HepG2 (cell line): ENCODE measurements at regions of chr6 and their contacts with region 1.

Region 1: GRCh38 chr6:14210663-14211561 is 93.3 kb downstream of the CD83 start:
- DNase-seq: peak; percentile 74
- ATAC-seq: peak; percentile 91
- H3K4me3 ChIP-seq: peak overlapping the region; percentile 56 to 80 (median 58)
- H3K27ac ChIP-seq: no peak overlapping the region
- H3K4me1 ChIP-seq: peaks cover 31% of the 10 kb centered on the region
- H3K27me3 ChIP-seq: peaks cover 0 to 21% of the 10 kb centered on the region in 2 experiments; a peak in 3 of 5 replicates
- CTCF ChIP-seq: peak; percentile 75
- EP300 ChIP-seq: peak in 1 of 2 experiments; percentile 87; a peak in 2 of 4 replicates
- POLR2A ChIP-seq: peak in 1 of 2 experiments; percentile 53; a peak in 1 of 4 replicates
- RAD21 ChIP-seq: peak; percentile 99

Region 2: DNA sequence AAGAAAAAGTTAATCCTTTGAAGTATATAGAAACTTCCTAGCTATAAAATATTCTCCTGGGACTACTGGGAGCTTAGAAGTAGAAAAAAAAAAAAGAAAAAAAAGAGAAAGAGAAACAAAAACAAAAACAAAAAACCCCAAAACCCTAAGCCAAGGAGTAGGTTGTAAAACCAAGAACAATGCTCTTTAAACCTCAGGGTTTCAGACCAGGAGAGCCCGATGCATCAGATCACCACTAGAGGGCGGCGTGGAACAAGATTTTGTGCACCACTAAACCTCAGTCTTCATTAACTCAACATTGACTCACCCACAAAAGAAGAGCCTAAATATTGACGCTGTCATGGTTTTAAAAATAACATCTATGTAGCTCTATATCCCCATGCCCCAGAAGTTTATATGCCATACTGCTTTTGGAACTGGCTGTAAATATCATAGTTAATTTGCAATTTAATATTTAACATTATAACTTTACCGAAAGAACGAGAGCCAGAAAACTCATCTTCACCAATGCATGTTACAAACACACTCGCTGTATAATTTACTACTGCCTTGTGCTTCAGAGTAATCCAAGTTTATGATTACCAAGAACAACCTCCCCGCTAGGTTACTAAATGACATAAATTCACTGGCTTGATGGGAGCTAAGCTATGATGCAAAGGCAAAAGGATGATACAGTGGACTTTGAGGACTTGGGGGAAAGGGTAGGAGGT is 415.7 kb before region 1 on chr6:
- CTCF ChIA-PET with region 1: no interaction called
- POLR2A ChIA-PET with region 1: no interaction called
- in situ Hi-C with region 1: no loop called
- intact Hi-C with region 1: no loop called
- DNase-seq: peak; percentile 73
- ATAC-seq: peak; percentile 93
- H3K4me3 ChIP-seq: no peak overlapping the region
- H3K27ac ChIP-seq: no peak overlapping the region
- H3K4me1 ChIP-seq: no peaks in the 10 kb centered on the region
- H3K27me3 ChIP-seq: no peaks in the 10 kb centered on the region
- CTCF ChIP-seq: peak; percentile 91
- EP300 ChIP-seq: no peak
- POLR2A ChIP-seq: no peak
- RAD21 ChIP-seq: peak; percentile 73

Region 3: GRCh38 chr6:14510038-14510437 is 299.1 kb after region 1 on chr6:
- CTCF ChIA-PET with region 1: interaction called, 4 read pairs
- POLR2A ChIA-PET with region 1: no interaction called
- in situ Hi-C with region 1: no loop called
- intact Hi-C with region 1: loop called (anchors 1 kb)
- DNase-seq: peak; percentile 16
- ATAC-seq: 0 out of 3 replicates have a peak, but pooled peaks have one; percentile 32
- H3K4me3 ChIP-seq: no peak overlapping the region
- H3K27ac ChIP-seq: no peak overlapping the region
- H3K4me1 ChIP-seq: no peaks in the 10 kb centered on the region
- H3K27me3 ChIP-seq: no peaks in the 10 kb centered on the region
- CTCF ChIP-seq: no peak
- EP300 ChIP-seq: no peak
- POLR2A ChIP-seq: no peak
- RAD21 ChIP-seq: no peak

Region 4: DNA sequence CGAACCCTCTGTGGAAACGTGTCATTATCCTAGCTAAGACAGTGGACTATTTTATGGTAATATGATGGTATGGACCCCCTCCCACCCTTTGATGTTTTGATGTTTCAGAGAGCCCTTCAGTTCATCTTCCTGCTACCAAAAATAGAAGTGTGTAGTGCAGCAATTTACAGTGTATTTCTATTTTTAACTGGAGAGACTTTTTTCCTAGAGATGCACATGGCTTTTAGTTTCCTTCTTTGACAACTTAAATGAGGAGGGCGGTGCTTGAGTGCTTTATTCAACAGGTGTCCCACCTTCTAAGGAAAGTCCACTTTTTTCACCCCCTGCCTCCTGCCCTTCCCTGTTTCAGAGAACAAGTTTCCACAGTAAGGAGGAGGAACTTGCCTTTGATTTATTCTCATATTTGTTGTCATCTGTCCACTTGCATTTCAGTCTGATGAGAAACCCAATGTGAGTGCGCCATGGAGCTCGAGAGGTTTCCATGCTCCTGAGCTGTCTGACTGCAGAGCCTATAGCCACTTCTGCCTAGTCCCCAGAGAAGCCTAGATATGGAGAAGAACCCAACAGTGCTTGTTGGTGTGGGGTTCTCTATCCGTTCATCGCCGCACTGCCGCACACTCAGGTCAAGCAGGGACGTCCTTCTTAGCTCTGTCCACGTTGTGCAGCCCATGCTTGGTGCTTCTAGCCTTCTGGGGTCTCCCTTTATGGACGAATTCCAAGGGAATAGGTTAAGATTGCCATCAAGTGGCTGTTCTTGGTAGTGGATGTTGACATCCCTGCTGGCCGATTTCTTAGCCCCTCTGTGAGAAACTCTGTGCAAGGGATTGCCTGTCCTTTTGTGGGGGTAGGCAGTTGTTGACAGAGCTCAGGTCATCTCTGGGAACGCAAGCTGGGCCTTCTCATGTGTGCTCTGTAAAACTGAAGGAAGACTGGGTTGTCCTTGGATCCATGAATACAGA is 1179.1 kb after region 1 on chr6:
- CTCF ChIA-PET with region 1: no interaction called
- POLR2A ChIA-PET with region 1: no interaction called
- in situ Hi-C with region 1: loop called (anchors 10 kb)
- intact Hi-C with region 1: loop called (anchors 2 kb)
- DNase-seq: peak; percentile 60
- ATAC-seq: peak; percentile 89
- H3K4me3 ChIP-seq: no peak overlapping the region
- H3K27ac ChIP-seq: no peak overlapping the region
- H3K4me1 ChIP-seq: no peaks in the 10 kb centered on the region
- H3K27me3 ChIP-seq: no peaks in the 10 kb centered on the region
- CTCF ChIP-seq: peak; percentile 93
- EP300 ChIP-seq: no peak
- POLR2A ChIP-seq: no peak
- RAD21 ChIP-seq: peak; percentile 89

Region 5: DNA sequence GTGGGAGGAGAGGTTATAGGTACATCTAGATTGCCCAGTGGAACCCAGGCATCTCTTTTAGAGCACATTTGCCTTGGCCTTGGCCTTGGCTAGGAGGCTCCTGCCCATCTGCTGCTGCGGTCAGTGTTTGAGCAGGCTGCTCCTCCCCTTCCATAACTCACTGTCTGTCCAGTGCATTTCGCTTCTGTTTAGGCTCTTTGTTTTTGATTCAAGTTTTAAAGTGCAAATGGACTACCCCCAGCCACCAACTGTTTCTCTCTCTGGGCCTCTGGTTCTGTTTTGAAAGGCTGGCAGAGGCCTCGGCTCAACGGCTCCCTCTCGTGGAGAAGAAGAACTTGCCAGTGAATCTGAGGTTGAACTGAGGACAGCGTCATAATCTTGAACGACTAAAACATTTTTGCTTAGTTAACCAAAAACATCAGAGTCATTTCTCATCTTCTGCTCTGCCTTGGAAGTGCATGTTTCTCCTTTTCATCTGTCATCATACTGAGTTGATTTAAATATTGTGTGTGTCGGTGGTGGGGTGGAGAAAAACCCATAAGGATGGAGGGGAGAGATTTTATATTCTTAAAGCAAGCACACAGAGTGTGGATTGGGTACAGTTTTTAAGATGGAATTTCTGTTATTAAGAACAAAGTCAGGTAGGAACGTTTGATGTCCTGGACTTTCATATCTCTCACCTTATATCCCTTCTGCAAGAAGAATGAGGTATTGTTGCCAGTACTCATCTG is 1280.5 kb after region 1 on chr6:
- CTCF ChIA-PET with region 1: interaction called, 4 read pairs
- POLR2A ChIA-PET with region 1: no interaction called
- in situ Hi-C with region 1: loop called (anchors 25 kb)
- intact Hi-C with region 1: loop called (anchors 5 kb)
- DNase-seq: peak; percentile 94
- ATAC-seq: peak; percentile 92
- H3K4me3 ChIP-seq: no peak overlapping the region
- H3K27ac ChIP-seq: no peak overlapping the region
- H3K4me1 ChIP-seq: peaks cover 28% of the 10 kb centered on the region
- H3K27me3 ChIP-seq: no peaks in the 10 kb centered on the region
- CTCF ChIP-seq: peak; percentile 91
- EP300 ChIP-seq: peak in 1 of 2 experiments; percentile 59; a peak in 1 of 4 replicates
- POLR2A ChIP-seq: no peak
- RAD21 ChIP-seq: peak; percentile 80

Region 6: GRCh38 chr6:15621203-15622044 is 1410.5 kb after region 1 on chr6:
- CTCF ChIA-PET with region 1: interaction called, 3 read pairs
- POLR2A ChIA-PET with region 1: no interaction called
- in situ Hi-C with region 1: loop called (anchors 25 kb)
- intact Hi-C with region 1: no loop called
- DNase-seq: no peak
- ATAC-seq: peak; percentile 53; the same call in 2 of the 3 replicates
- H3K4me3 ChIP-seq: no peak overlapping the region
- H3K27ac ChIP-seq: no peak overlapping the region
- H3K4me1 ChIP-seq: peaks cover under 1% of the 10 kb centered on the region
- H3K27me3 ChIP-seq: no peaks in the 10 kb centered on the region
- CTCF ChIP-seq: no peak
- EP300 ChIP-seq: no peak
- POLR2A ChIP-seq: no peak
- RAD21 ChIP-seq: no peak